Activated CD8-positive, alpha-beta T cell treated with anti-CD3 and anti-CD28 coated beads, Interleukin-2, amount 10 ng/mL, durations not matched to agents 7 days and 5 days (primary cell): ENCODE measurements at regions of chr1 and their contacts with region 1.

Region 1: DNA sequence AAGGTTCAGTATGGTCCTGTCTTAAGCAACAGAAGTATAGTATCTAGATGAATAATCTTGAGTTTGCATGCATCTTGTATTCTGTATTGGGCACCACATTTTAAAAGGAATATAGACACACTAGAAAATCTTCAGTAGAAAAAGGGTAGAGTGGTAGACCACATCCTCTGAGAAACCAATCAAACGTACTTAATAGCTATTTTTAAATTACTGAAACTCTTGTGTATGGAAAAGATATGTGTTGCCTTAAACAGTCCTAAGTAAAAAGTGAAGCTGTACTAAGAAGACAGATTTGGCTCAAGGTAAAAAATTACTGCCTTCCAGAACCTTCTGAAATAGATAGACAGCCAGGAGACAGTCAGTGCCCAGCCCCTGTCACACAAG is 3.1 kb downstream of the CTXND2 start:
- DNase-seq: peak; percentile 27
- ATAC-seq: peak; percentile 87
- H3K4me3 Mint-ChIP-seq: peak overlapping the region; percentile 56
- H3K27ac Mint-ChIP-seq: peak overlapping the region; percentile 58
- H3K4me1 Mint-ChIP-seq: peaks cover 36% of the 10 kb centered on the region
- H3K27me3 Mint-ChIP-seq: no peaks in the 10 kb centered on the region

Region 2: GRCh38 chr1:150876119-150876454 is 13.9 kb before region 1 on chr1:
- CTCF ChIA-PET with region 1: interaction called, 10 read pairs
- POLR2A ChIA-PET with region 1: interaction called, 8 read pairs
- DNase-seq: peak; percentile 74
- ATAC-seq: peak; percentile 65
- H3K4me3 Mint-ChIP-seq: peak overlapping the region; percentile 84
- H3K27ac Mint-ChIP-seq: peak overlapping the region; percentile 83
- H3K4me1 Mint-ChIP-seq: peaks cover 30% of the 10 kb centered on the region
- H3K27me3 Mint-ChIP-seq: no peaks in the 10 kb centered on the region